ENCODE measurements at regions of chr1 and their contacts with region 1.

Region 1: DNA sequence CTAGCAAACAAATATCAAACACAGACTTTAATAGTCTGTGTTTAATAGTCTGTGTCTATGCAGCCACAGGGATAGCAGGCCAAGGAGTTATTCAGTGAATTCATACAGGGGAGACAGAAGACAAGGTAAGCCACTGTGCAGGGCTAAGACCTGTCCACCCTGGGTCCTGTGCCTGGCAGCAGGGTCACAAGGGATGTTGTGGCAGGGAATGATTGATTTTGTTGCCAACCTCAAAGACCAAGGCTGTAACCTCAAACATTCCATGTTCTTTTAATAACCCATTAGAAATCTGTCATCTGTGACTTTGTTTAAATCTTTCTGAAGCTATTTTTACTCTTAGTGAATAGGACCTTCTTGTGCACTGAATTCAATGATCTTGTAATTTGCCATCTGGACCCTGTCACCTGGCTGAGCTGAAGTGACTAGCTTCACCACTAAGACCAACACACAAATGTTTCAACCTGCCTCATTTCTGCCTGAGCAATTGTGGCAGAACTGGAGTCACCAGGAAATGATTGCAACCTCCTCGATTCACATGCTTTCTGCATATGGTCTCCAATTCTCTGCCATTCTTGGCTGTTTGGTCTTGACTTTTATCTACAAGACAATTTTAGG is 154.2 kb downstream of the ASTN1 start:
- DNase-seq: no peak
- H3K4me3 ChIP-seq: no peak overlapping the region
- H3K4me1 ChIP-seq: no peaks in the 10 kb centered on the region
- H3K27me3 ChIP-seq: no peaks in the 10 kb centered on the region

Region 2: GRCh38 chr1:176617881-176618280 is 392.4 kb before region 1 on chr1:
- in situ Hi-C with region 1: no loop called
- DNase-seq: no peak
- H3K4me3 ChIP-seq: no peak overlapping the region
- H3K4me1 ChIP-seq: no peaks in the 10 kb centered on the region
- H3K27me3 ChIP-seq: no peaks in the 10 kb centered on the region

Region 3: GRCh38 chr1:177069490-177069889 is 59.2 kb after region 1 on chr1:
- in situ Hi-C with region 1: loop called (anchors 10 kb)
- DNase-seq: no peak
- H3K4me3 ChIP-seq: no peak overlapping the region
- H3K4me1 ChIP-seq: no peaks in the 10 kb centered on the region
- H3K27me3 ChIP-seq: 0 out of 2 replicates have a peak, but pooled peaks cover 3% of the 10 kb centered on the region

Measured in HAP-1 (cell line).